ENCODE measurements at regions of chr12 and their contacts with region 1.

Region 1: DNA sequence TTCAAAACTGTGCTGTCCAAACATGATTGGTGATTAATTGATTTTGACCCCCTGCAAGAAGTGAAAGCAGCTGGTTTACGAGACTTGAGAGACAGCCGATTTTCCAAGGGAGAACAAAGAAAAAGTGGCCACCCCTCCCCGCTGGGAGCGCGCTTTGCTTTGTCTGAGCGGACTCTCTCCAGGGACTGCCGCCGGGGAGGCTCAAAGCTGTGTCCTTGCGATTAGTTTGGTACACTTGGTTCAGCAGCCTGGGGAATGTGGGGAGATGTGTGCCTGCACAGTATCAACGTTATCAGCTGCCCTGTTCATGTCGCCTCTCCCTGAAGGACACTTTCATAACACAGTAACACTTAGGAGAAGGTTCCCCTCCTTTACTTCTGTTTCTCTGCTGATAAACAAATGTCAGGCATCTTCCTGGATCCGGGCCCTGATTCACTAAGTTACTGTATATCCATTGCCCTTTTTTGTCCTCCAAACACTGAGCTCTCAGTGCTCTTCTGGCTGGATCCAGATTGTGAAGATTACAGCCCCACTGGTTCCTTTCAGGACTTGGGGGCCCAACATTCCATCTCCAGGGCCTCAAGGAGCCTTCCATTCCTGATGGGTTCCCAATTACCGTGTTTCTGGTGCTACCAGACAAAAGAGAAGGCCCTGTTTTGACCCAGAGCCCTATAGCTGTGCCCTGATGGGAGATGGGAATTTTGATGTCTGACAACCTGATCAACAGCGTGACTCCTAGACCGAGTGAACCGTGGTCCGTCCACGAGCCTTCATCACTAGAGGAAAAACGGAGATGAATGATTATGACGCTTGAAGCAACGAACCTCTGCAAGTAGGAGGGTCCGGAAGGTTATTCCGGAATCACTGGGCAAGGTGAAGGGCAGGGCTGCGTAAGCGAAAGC is 31.7 kb upstream of the TUBA1C start:
- DNase-seq: peak; percentile 64
- H3K4me3 ChIP-seq: peak overlapping the region in 1 of 2 experiments; percentile 41; a peak in 2 of 4 replicates
- H3K27ac ChIP-seq: peak overlapping the region; percentile 79 to 90
- H3K4me1 ChIP-seq: peaks cover 23 to 25% of the 10 kb centered on the region in 2 experiments
- H3K27me3 ChIP-seq: no peaks in the 10 kb centered on the region
- CTCF ChIP-seq: peak; percentile 41
- EP300 ChIP-seq: peak in 1 of 2 experiments; percentile 44; a peak in 1 of 4 replicates
- RAD21 ChIP-seq: no peak

Region 2: DNA sequence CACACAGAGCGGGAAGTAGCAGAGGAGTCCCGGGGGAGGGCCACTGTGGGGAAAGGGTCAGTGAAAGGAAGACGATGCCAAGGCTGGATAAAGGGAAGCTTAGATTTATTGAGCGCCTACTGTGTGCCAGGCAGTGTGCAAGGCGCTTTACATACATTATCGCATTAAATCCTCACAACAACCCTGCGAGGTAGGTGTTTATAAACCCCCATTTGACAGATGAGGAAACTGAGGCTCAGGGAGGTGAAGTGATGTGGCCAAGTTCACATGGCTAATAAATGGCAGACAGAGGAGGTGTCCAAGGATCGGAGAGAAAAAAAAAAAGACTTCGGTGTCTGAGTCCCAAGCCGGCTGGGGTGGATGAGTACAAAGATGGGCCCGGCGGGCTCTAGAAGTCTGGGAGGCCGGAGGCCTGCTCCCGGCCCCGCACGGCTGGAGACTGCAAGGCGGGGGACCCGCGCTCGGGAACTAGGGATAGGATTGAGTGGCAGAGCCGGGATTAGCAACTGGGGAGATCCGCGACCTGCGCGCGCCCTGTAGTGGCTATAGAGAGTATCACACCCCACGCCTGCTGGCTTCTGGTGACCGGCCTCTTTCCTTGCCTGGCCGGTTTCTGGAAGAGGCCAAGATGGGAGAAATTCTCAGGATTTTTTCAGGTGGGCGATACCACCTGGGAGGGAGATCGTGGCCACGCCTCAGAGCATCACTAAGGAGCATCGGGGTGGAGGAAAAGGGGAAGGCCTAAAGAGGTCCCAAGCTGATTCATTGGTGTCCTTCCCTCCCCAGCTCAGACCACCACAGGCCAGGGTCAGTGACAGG is 237.9 kb before region 1 on chr12:
- CTCF ChIA-PET with region 1: no interaction called
- POLR2A ChIA-PET with region 1: no interaction called
- DNase-seq: peak; percentile 98
- H3K4me3 ChIP-seq: peak overlapping the region; percentile 1 to 41; a peak in 1 of 4 replicates
- H3K27ac ChIP-seq: no peak overlapping the region
- H3K4me1 ChIP-seq: peaks cover 9 to 17% of the 10 kb centered on the region in 2 experiments; a peak in 3 of 4 replicates
- H3K27me3 ChIP-seq: no peaks in the 10 kb centered on the region; the same call in 1 of the 2 replicates
- CTCF ChIP-seq: peak; percentile 70
- EP300 ChIP-seq: no peak
- RAD21 ChIP-seq: peak; percentile 86

Region 3: GRCh38 chr12:49188914-49189367 is 44.2 kb before region 1 on chr12 and contains the start of gene TUBA1A:
- CTCF ChIA-PET with region 1: interaction called, 79 read pairs
- POLR2A ChIA-PET with region 1: interaction called, 94 read pairs
- DNase-seq: peak; percentile 93
- H3K4me3 ChIP-seq: peak within 1 kb of the TSS; percentile 91 to 94
- H3K27ac ChIP-seq: peak within 1 kb of the TSS; percentile 98
- H3K4me1 ChIP-seq: peaks cover 6 to 28% of the 10 kb centered on the region in 2 experiments; a peak in 2 of 4 replicates
- H3K27me3 ChIP-seq: no peaks in the 10 kb centered on the region
- CTCF ChIP-seq: no peak
- EP300 ChIP-seq: peak; percentile 16 to 63; a peak in 3 of 4 replicates
- RAD21 ChIP-seq: no peak
- polyA plus RNA-seq, gene TUBA1A: 1,427 and 1,906 TPM in 2 replicates

Region 4: DNA sequence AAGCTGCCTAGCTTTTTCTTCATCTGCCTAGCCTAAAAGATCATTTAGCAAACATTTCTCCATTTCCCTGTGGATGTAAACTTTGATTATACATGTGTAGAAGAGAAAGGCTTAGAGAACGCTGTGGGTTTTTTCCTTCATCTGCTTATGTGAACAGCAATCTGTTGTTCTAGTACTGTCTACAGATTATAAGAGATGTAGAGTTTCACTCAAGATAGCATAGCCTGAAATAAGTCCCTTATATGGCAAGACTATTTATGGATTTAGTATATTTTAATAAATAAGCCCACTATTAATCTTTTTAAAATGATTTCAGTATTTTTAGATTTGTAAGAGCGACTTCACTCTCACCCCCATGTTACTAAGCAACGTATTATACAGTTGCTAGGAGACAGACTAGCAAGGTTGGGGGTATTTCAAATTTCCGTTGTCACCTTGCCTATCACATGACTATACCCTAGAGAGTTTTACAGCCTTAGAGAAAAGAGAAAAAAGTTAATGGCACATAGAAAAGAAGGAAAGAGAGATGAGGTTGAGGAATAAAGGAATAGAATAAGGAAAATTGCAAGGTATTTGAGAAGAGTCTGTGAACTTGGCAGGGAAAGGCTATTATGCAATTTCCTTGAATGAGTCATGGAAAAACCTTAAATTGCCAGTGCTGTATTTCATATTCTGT is 32.1 kb before region 1 on chr12:
- CTCF ChIA-PET with region 1: interaction called, 14 read pairs
- POLR2A ChIA-PET with region 1: no interaction called
- DNase-seq: peak; percentile 34
- H3K4me3 ChIP-seq: peak overlapping the region; percentile 14 to 43; a peak in 2 of 4 replicates
- H3K27ac ChIP-seq: peak overlapping the region; percentile 90 to 100
- H3K4me1 ChIP-seq: peaks cover 5 to 34% of the 10 kb centered on the region in 2 experiments
- H3K27me3 ChIP-seq: no peaks in the 10 kb centered on the region
- CTCF ChIP-seq: no peak
- EP300 ChIP-seq: peak in 1 of 2 experiments; percentile 67; a peak in 1 of 4 replicates
- RAD21 ChIP-seq: no peak

Region 5: GRCh38 chr12:49244176-49244575 is 11.0 kb after region 1 on chr12:
- CTCF ChIA-PET with region 1: interaction called, 13 read pairs
- POLR2A ChIA-PET with region 1: interaction called, 4 read pairs
- DNase-seq: no peak
- H3K4me3 ChIP-seq: no peak overlapping the region
- H3K27ac ChIP-seq: peak overlapping the region; percentile 59 to 96; a peak in 3 of 4 replicates
- H3K4me1 ChIP-seq: peaks cover 0 to 13% of the 10 kb centered on the region in 2 experiments; a peak in 2 of 4 replicates
- H3K27me3 ChIP-seq: no peaks in the 10 kb centered on the region
- CTCF ChIP-seq: no peak
- EP300 ChIP-seq: no peak
- RAD21 ChIP-seq: no peak

Region 6: GRCh38 chr12:49428793-49429192 is 195.6 kb after region 1 on chr12:
- CTCF ChIA-PET with region 1: no interaction called
- POLR2A ChIA-PET with region 1: no interaction called
- DNase-seq: no peak
- H3K4me3 ChIP-seq: no peak overlapping the region
- H3K27ac ChIP-seq: peak overlapping the region in 1 of 2 experiments; percentile 27; a peak in 2 of 4 replicates
- H3K4me1 ChIP-seq: peaks cover 0 to 14% of the 10 kb centered on the region in 2 experiments; a peak in 1 of 4 replicates
- H3K27me3 ChIP-seq: no peaks in the 10 kb centered on the region
- CTCF ChIP-seq: no peak
- EP300 ChIP-seq: no peak
- RAD21 ChIP-seq: no peak

Region 7: DNA sequence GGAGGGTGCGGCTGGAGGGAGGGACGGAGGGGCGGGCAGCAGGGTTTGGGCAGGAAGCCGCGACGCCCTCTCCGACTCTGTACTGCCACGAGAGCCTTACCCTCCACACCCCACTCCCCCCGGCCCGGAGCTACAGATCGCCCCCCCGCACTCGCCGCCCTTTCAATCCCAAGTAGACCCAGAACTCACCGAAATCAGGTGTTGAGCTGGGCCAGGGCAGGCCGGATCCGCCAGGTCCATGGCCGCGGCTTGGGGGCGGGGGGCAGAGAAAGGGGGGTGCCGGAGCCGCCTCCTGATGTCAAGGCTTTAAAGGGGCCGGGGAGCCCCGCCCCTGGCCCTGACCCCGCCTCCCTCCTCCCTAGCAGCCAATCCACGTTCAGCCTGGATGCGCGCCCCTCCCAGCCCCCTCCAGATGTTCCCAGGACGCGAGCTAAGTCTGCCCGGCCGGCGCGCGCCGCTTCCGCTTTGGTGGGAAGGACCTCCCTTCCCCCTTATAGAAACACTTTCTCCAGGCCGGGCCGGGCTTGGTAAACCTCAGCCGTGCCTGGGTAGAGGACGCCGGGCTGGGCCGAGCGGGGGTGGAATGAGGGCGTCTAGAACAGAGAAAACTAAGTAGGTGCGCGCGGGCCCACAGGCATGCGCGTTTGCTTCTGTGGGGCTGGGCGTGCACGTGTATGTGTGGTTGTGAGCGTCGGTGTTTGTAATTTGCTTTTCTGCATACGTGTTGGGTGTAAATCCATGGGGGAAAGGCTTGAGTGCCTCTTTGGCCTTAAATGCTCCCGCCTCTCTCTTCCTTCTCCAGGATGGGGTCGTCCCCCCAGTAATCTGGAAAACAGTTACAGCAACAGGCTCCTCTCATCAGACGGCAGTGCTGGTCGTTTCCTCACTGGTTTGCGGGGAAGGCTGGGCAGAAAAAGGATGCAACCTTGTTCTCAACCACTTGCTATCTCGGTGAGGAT is 595.2 kb after region 1 on chr12 and contains the start of gene NCKAP5L:
- CTCF ChIA-PET with region 1: no interaction called
- POLR2A ChIA-PET with region 1: no interaction called
- DNase-seq: peak; percentile 99
- H3K4me3 ChIP-seq: peak within 1 kb of the TSS; percentile 87 to 92
- H3K27ac ChIP-seq: peak within 1 kb of the TSS; percentile 80 to 96
- H3K4me1 ChIP-seq: peaks cover 15 to 29% of the 10 kb centered on the region in 2 experiments; a peak in 3 of 4 replicates
- H3K27me3 ChIP-seq: no peaks in the 10 kb centered on the region
- CTCF ChIP-seq: no peak
- EP300 ChIP-seq: no peak
- RAD21 ChIP-seq: no peak
- polyA plus RNA-seq, gene NCKAP5L: 8.7 and 8.9 TPM in 2 replicates